ENCODE measurements at regions of chr3 and their contacts with region 1.

Region 1: DNA sequence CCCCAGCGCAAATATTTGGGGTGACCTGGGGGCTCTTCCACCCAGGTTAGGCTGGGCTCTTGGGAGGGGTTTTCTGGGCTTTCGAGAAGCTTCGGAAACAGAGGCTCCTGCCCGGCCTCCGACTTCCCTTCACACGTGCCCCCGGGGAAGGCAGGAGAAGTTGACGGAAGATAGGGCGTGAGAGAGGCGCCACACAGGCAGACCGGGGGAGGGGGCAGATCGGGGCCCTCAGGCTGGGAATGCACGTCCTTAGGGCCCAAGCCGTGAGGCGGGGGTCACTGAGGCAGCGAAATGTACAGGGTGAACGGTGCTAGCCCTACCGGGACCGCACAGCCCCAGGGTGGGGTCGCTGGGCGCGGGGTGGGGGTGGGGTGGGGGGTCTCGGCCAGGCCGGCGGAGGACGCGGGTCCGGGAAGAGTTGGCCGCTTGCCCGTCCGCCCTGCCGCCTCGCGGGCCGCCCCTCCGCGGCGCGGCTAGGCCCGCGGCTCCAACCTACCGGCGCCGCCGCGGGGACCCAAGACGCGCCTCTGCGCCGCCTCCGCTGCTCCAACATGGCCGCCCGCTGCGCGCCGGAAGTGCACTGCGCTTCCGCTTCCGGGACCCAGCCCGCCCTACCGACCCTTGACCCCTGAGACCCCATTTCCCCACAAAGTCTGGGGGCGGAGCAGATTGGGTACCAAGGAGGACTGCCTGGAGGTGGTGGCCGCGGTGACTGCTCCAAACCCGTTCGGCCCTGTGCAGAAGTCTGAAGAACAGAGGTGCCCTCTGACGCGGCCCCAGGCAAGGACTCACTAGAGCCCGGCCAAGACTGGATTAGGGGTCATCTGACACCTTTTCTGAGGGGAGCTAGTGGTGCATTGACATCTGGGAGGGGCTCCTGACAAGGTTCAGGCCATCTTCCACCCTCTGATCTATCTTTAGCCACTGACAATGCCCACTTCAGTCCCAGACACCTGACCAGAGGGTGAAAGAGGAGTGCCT is at the start of gene CCDC71:
- DNase-seq: peak in 1 of 2 donors; percentile 69
- ATAC-seq: peak; percentile 65 to 68
- H3K4me3 ChIP-seq: peak within 1 kb of the TSS; percentile 64 to 88 (median 81)
- H3K27ac ChIP-seq: peak within 1 kb of the TSS; percentile 80 to 92 (median 86)
- H3K4me1 ChIP-seq: peaks cover 23 to 33% of the 10 kb centered on the region in 2 donors
- H3K27me3 ChIP-seq: no peaks in the 10 kb centered on the region
- CTCF ChIP-seq: no peak
- POLR2A ChIP-seq: peak; percentile 54 to 81
- total RNA-seq, gene CCDC71: 20.0 to 31.0 (median 22.0) TPM

Region 2: DNA sequence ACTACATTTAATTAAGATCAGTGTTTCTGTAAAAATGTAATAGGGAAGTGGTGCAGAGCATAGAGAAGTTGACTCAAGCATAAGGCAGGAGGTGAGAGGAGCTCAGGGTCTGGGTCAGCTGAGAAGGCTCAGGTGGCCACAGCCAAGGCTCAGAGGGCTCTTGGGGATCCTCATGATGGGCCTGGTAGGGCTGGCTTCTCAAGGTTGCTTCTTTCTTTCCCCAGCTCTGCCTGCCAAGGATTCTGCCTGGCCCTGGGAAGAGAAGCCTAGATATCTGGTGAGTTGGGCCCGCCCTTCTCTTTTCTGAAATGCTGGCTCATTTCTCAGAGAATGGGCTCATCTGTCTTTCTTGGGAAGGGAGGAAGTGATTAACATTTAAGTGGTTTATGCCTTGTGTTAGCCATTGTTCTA is 918.7 kb before region 1 on chr3:
- in situ Hi-C with region 1: no loop called
- intact Hi-C with region 1: no loop called
- DNase-seq: no peak
- ATAC-seq: no peak
- H3K4me3 ChIP-seq: no peak overlapping the region
- H3K27ac ChIP-seq: no peak overlapping the region
- H3K4me1 ChIP-seq: peaks cover 5 to 9% of the 10 kb centered on the region in 2 donors
- H3K27me3 ChIP-seq: no peaks in the 10 kb centered on the region
- CTCF ChIP-seq: no peak
- POLR2A ChIP-seq: no peak

Region 3: GRCh38 chr3:49327485-49327884 is 161.4 kb after region 1 on chr3:
- in situ Hi-C with region 1: no loop called
- intact Hi-C with region 1: no loop called
- DNase-seq: no peak
- ATAC-seq: no peak
- H3K4me3 ChIP-seq: no peak overlapping the region
- H3K27ac ChIP-seq: no peak overlapping the region
- H3K4me1 ChIP-seq: no peaks in the 10 kb centered on the region
- H3K27me3 ChIP-seq: no peaks in the 10 kb centered on the region
- CTCF ChIP-seq: no peak
- POLR2A ChIP-seq: no peak

Region 4: GRCh38 chr3:49358217-49358883 is 192.3 kb after region 1 on chr3 and contains the start of gene GPX1:
- in situ Hi-C with region 1: no loop called
- intact Hi-C with region 1: loop called (anchors 1 kb)
- DNase-seq: peak; percentile 85 to 93
- ATAC-seq: peak; percentile 84 to 89
- H3K4me3 ChIP-seq: peak within 1 kb of the TSS; percentile 73 to 77 (median 73)
- H3K27ac ChIP-seq: peak within 1 kb of the TSS; percentile 85 to 91 (median 86)
- H3K4me1 ChIP-seq: peaks cover 14 to 16% of the 10 kb centered on the region in 2 donors
- H3K27me3 ChIP-seq: no peaks in the 10 kb centered on the region
- CTCF ChIP-seq: no peak
- POLR2A ChIP-seq: peak; percentile 84 to 93
- total RNA-seq, gene GPX1: 75.2 to 157 (median 123) TPM

Region 5: GRCh38 chr3:49445381-49445780 is 279.3 kb after region 1 on chr3:
- in situ Hi-C with region 1: loop called (anchors 10 kb)
- intact Hi-C with region 1: loop called (anchors 1 kb)
- DNase-seq: no peak
- ATAC-seq: no peak
- H3K4me3 ChIP-seq: no peak overlapping the region
- H3K27ac ChIP-seq: no peak overlapping the region
- H3K4me1 ChIP-seq: peaks cover 0 to 4% of the 10 kb centered on the region in 2 donors
- H3K27me3 ChIP-seq: no peaks in the 10 kb centered on the region
- CTCF ChIP-seq: no peak
- POLR2A ChIP-seq: no peak

Measured in gastrocnemius medialis (tissue), 4 donors.